ENCODE measurements at regions of chr3 and their contacts with region 1.

Region 1: DNA sequence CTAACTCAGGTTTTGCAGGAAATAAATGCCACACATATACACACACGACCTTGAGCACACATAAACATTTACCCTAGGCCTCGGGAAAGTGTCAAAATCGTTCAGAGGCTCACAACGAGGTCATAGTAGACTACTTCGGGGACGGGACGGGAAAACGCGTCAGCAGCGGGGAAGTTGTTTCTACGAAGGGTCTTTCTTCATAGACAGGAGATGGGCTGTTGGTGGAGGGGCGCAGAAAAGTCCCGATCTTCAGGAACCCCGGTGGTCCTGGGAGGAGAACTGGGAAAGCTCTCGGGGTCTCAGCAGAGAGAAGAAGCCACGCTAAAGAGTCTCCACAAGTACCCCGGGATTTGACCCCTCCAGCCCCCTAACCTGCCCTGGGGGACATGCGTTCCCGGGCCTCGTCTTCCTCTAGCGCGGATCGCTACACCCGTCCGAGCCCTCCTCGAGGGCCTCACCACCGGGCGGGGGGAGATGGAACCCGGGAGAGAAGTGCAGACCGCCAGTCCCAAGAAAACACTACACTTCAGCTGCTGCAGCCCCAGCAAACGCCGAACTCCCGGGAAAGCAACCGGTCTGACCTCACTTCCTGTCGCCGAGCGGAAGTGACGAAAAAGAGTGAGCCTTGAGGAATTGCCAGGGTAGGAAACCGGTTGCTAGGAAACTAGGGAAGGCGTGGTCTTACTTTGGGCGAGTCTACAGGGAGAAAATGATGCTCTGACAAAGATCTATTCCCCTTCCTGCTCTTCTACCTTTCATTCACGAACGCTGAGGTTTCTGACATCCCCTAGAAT is at the start of gene PIK3R4:
- DNase-seq: peak; percentile 96
- ATAC-seq: peak; percentile 85
- H3K4me3 Mint-ChIP-seq: no peak within 1 kb of the TSS
- H3K27ac Mint-ChIP-seq: peak within 1 kb of the TSS; percentile 100
- H3K4me1 Mint-ChIP-seq: peaks cover 30% of the 10 kb centered on the region
- H3K27me3 Mint-ChIP-seq: no peaks in the 10 kb centered on the region
- CTCF ChIP-seq: no peak
- total RNA-seq, gene PIK3R4: 37.2 to 43.8 TPM (median 41.5 TPM) in 3 replicates

Region 2: GRCh38 chr3:130707902-130708601 is 38.4 kb before region 1 on chr3:
- CTCF ChIA-PET with region 1: no interaction called
- POLR2A ChIA-PET with region 1: no interaction called
- DNase-seq: no peak
- ATAC-seq: no peak
- H3K4me3 Mint-ChIP-seq: no peak overlapping the region
- H3K27ac Mint-ChIP-seq: no peak overlapping the region
- H3K4me1 Mint-ChIP-seq: no peaks in the 10 kb centered on the region
- H3K27me3 Mint-ChIP-seq: no peaks in the 10 kb centered on the region
- CTCF ChIP-seq: no peak

Region 3: GRCh38 chr3:130892759-130893375 is 146.4 kb after region 1 on chr3:
- CTCF ChIA-PET with region 1: interaction called, 23 read pairs
- POLR2A ChIA-PET with region 1: interaction called, 14 read pairs
- DNase-seq: peak; percentile 46
- ATAC-seq: peak; percentile 14
- H3K4me3 Mint-ChIP-seq: peak overlapping the region; percentile 87
- H3K27ac Mint-ChIP-seq: peak overlapping the region; percentile 78
- H3K4me1 Mint-ChIP-seq: peaks cover 36% of the 10 kb centered on the region
- H3K27me3 Mint-ChIP-seq: no peaks in the 10 kb centered on the region
- CTCF ChIP-seq: peak; percentile 51

Measured in WTC11 (cell line).